ENCODE measurements at regions of chr19 and their contacts with region 1.

Region 1: GRCh38 chr19:8208922-8209461 is at the start of gene CERS4:
- DNase-seq: no peak
- H3K4me3 ChIP-seq: peak within 1 kb of the TSS; percentile 71 to 84 (median 71)
- H3K27ac ChIP-seq: peak within 1 kb of the TSS; percentile 44
- H3K4me1 ChIP-seq: peaks cover 12% of the 10 kb centered on the region
- H3K27me3 ChIP-seq: no peaks in the 10 kb centered on the region
- CTCF ChIP-seq: no peak
- total RNA-seq, gene CERS4: 21.0 to 23.3 TPM

Region 2: DNA sequence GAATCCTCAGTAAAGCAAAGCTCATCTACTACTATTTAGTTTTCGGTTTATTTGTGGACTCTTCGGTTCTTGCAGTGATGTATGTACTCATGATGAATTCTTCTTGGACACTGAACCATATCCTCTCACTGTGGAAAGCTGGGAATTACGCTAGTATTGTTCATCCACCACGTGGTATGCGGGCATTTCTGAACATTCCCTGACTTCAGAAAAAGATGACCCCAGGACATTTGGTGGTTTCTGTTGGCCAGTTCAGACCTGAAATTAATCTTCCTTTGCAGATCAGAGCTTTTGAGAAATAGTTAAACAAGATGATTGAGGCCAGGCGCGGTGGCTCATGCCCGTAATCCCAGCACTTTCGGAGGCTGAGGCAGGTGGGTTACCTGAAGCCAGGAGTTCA is 34.3 kb before region 1 on chr19:
- CTCF ChIA-PET with region 1: no interaction called
- dilution Hi-C with region 1: loop called (anchors 5 kb)
- in situ Hi-C with region 1: no loop called
- intact Hi-C with region 1: loop called (anchors 2 kb)
- DNase-seq: peak; percentile 99
- H3K4me3 ChIP-seq: no peak overlapping the region
- H3K27ac ChIP-seq: peak overlapping the region; percentile 54
- H3K4me1 ChIP-seq: peaks cover 9% of the 10 kb centered on the region
- H3K27me3 ChIP-seq: no peaks in the 10 kb centered on the region
- CTCF ChIP-seq: no peak

Region 3: DNA sequence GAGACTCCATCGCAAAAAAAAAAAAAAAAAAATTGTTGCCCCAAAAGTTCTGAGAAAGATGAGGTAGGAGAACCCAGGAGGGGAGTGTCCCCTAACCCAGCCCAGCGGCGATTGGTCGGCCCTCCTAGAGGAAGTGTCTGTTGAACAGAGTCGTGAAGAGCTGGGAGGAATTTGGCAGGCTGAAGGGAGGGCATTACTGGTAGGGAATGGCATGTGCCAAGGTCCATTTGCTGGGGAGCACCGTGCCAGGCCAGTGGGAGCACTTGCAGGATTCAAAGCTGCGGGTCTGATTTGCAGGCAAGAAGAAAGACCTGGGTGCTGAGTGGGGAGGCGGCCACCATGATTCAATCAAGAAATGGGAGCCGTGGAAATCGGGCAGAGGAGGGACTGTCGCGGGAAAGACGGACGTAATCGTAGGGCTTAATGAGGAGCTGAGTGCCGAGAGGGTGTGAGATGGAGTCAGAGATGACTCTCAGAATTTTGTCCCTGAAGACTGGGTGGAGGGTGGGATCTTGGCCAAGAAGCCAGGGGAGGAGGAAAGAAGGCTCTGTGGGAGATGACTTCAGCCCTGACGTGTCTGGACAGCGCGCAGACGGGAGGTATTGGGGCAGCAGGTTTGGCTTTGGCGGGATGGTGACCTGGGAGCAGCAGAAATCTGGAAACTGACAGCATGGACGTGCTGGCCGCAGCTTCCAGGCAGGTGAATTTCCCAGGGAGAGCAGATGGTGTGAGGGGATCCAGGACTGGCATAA is 15.6 kb after region 1 on chr19:
- CTCF ChIA-PET with region 1: no interaction called
- dilution Hi-C with region 1: no loop called
- in situ Hi-C with region 1: no loop called
- intact Hi-C with region 1: loop called (anchors 2 kb)
- DNase-seq: peak; percentile 90
- H3K4me3 ChIP-seq: peak overlapping the region in 1 of 3 experiments; percentile 28
- H3K27ac ChIP-seq: peak overlapping the region; percentile 21
- H3K4me1 ChIP-seq: peaks cover 9% of the 10 kb centered on the region
- H3K27me3 ChIP-seq: no peaks in the 10 kb centered on the region
- CTCF ChIP-seq: no peak

Region 4: DNA sequence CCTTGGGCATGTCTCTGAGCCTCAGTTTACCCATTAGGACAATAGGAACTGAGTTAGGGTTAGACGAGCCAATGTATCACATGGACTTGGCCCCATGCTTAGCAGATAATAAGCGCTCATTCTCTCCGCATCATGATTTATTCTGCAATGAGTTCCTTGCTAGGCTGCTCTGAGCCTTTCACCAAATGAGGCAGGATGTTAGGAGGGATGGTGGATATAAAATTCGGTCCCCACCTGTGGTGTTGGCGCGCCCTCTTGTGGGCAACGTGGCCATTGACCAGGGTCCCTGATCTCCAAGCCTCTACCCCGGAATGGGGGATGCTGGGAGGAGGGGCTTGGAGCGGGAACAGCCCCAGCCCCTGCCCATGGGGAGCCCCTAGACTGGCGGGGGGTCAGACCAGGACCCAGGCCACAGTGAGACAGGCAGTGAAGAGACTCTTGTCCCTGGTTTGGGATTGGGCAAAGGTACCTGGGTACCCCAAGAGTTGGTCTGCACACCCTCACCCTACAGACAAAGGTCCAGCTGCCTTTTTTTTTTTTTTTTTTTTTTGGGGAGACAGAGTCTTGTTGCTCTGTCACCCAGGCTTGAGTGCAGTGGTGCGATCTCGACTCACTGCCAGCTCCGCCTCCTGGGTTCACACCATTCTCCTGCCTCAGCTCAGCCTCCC is 44.1 kb after region 1 on chr19:
- CTCF ChIA-PET with region 1: interaction called, 42 read pairs
- dilution Hi-C with region 1: no loop called
- in situ Hi-C with region 1: no loop called
- intact Hi-C with region 1: loop called (anchors 5 kb)
- DNase-seq: peak; percentile 54
- H3K4me3 ChIP-seq: no peak overlapping the region
- H3K27ac ChIP-seq: no peak overlapping the region
- H3K4me1 ChIP-seq: peaks cover 3% of the 10 kb centered on the region
- H3K27me3 ChIP-seq: no peaks in the 10 kb centered on the region
- CTCF ChIP-seq: peak; percentile 82 to 94

Region 5: DNA sequence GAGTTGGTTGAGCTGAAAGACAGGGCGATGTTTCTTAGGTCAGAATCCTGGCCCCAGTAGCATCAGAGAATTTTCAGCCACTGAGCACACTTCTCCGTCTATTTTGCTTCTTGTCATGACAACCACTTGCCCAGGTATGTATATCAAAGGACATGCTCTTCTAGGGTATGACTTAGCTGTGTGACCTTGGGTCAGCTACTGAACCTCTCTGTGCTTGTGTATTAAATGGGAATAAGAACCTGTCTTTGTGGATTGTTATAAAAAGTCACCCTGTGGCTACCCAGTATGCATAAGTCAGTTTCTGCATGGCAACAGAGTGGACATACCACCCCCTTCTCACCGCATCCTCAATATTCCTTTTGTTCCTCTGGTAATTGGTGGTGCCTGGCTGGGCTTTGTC is 649.3 kb after region 1 on chr19:
- CTCF ChIA-PET with region 1: no interaction called
- dilution Hi-C with region 1: no loop called
- in situ Hi-C with region 1: no loop called
- intact Hi-C with region 1: no loop called
- DNase-seq: no peak
- H3K4me3 ChIP-seq: no peak overlapping the region
- H3K27ac ChIP-seq: no peak overlapping the region
- H3K4me1 ChIP-seq: no peaks in the 10 kb centered on the region
- H3K27me3 ChIP-seq: no peaks in the 10 kb centered on the region
- CTCF ChIP-seq: no peak